ENCODE measurements at regions of chr6 and their contacts with region 1.

Region 1: DNA sequence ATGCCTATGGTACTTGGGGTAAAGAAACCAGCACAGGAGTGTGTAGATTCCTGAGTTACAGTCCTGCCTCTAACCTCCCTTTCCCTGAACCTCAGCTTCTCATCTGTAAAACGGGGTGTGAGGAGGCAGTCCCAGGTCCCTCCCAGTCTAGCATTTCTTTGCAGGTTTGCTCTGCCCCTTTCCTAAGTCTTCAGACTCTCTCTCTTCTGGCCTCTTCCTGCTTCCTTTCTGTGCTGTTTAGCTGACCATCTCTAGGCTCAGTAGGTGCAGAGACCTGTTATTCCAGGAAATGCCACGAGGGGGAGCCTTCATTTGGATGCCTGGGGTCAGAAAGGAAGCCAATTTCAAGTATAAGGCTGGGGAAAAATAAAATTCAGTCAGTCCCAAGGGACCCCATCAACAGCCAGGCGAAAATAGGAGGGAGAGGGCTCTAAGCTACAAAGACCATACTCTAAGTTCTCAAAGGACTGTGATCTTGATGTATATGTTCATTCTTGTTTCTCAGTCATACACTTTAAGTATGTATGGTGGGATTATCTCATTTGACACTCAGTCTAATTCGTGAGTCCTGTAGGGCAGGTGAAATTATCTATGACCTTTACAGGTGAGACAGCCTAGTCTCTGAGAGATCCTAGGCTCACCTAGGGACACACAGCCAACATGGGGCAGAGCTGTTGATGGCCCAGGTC is 89.1 kb downstream of the NCR2 start:
- DNase-seq: peak; percentile 47 to 93
- H3K4me3 ChIP-seq: no peak overlapping the region
- H3K27ac ChIP-seq: no peak overlapping the region
- H3K4me1 ChIP-seq: peaks cover 4 to 27% of the 10 kb centered on the region in 2 donors
- H3K27me3 ChIP-seq: no peaks in the 10 kb centered on the region
- CTCF ChIP-seq: peak; percentile 66 to 91 (median 85)

Region 2: GRCh38 chr6:41072676-41073623 is 351.6 kb before region 1 on chr6 and contains the start of gene NFYA:
- intact Hi-C with region 1: loop called (anchors 10 kb)
- DNase-seq: peak; percentile 98 to 100
- H3K4me3 ChIP-seq: peak within 1 kb of the TSS; percentile 80 to 86
- H3K27ac ChIP-seq: peak within 1 kb of the TSS; percentile 98 to 100
- H3K4me1 ChIP-seq: peaks cover 10 to 27% of the 10 kb centered on the region in 2 donors
- H3K27me3 ChIP-seq: no peaks in the 10 kb centered on the region
- CTCF ChIP-seq: peak; percentile 19 to 62 (median 25)
- total RNA-seq, gene NFYA: 10.4 TPM

Region 3: GRCh38 chr6:41449399-41450245 is 25.1 kb after region 1 on chr6:
- intact Hi-C with region 1: loop called (anchors 2 kb)
- DNase-seq: no peak
- H3K4me3 ChIP-seq: no peak overlapping the region
- H3K27ac ChIP-seq: no peak overlapping the region
- H3K4me1 ChIP-seq: peaks cover 14 to 16% of the 10 kb centered on the region in 2 donors
- H3K27me3 ChIP-seq: no peaks in the 10 kb centered on the region
- CTCF ChIP-seq: no peak

Region 4: GRCh38 chr6:41505122-41506049 is 80.9 kb after region 1 on chr6:
- intact Hi-C with region 1: loop called (anchors 2 kb)
- DNase-seq: peak in 1 of 2 donors; percentile 90
- H3K4me3 ChIP-seq: peak overlapping the region; percentile 53 to 63
- H3K27ac ChIP-seq: peak overlapping the region; percentile 85 to 90
- H3K4me1 ChIP-seq: peaks cover 4 to 12% of the 10 kb centered on the region in 2 donors
- H3K27me3 ChIP-seq: no peaks in the 10 kb centered on the region
- CTCF ChIP-seq: no peak

Region 5: GRCh38 chr6:41591859-41592502 is 167.5 kb after region 1 on chr6:
- intact Hi-C with region 1: loop called (anchors 1 kb)
- DNase-seq: peak in 1 of 2 donors; percentile 85
- H3K4me3 ChIP-seq: no peak overlapping the region
- H3K27ac ChIP-seq: no peak overlapping the region
- H3K4me1 ChIP-seq: no peaks in the 10 kb centered on the region
- H3K27me3 ChIP-seq: no peaks in the 10 kb centered on the region
- CTCF ChIP-seq: peak; percentile 84 to 89 (median 89)

Region 6: GRCh38 chr6:41878246-41878645 is 453.7 kb after region 1 on chr6:
- intact Hi-C with region 1: no loop called
- DNase-seq: no peak
- H3K4me3 ChIP-seq: no peak overlapping the region
- H3K27ac ChIP-seq: no peak overlapping the region
- H3K4me1 ChIP-seq: no peaks in the 10 kb centered on the region
- H3K27me3 ChIP-seq: no peaks in the 10 kb centered on the region
- CTCF ChIP-seq: no peak